Activated CD4-positive, alpha-beta T cell treated with anti-CD3 and anti-CD28 coated beads, Interleukin-2, amount 10 ng/mL, durations not matched to agents 24 days and 14 days (primary cell): ENCODE measurements at regions of chr1 and their contacts with region 1.

Region 1: DNA sequence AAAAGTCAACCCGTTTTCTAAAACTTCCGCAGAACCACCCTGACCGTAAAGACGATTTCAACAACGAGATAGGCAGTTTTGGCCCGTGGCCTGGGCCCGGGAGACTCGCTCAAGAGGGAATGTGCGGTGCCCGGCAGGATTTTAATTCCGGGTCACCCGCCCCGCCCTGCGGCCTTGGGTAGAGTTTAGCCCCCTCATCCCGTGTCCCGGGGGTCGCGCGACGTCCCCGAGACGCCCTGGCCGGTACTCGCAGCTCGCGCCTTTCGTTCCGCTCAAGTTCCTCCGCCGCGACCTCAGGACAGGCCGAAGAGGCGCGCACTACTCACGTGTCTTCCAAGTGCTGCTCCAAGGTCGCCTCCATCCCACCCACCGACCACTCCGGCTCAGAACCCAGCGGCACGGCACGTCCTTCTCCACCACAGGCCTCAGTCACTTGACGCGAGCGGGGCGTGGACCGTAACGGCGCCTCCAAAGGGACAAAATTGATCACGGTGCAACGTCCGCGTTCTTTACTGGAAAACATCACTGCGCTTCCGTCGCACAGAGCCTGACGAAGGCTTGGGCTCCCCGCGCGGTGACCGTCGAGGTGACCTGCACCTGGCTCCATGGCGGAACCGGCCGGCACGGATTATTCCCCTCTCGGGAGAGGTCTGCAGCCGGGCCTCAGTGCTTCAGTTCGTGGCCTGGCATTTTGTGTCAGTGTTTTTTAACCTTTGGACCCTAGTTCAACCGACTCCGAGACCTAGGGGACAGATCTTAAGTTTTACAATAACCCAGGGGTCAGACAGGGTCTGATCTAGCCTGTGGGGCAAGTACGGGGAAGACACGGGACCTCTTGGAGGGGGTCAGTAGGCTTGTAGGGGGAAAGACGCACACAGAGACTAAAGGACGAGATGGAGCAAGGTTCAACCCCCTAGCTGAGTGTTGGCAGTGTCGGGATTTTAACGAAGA is at the start of gene LAMTOR5:
- DNase-seq: peak; percentile 98
- H3K4me3 Mint-ChIP-seq: peak within 1 kb of the TSS; percentile 99
- H3K27ac Mint-ChIP-seq: peak within 1 kb of the TSS; percentile 98
- H3K4me1 Mint-ChIP-seq: peaks cover 17% of the 10 kb centered on the region
- H3K27me3 Mint-ChIP-seq: no peaks in the 10 kb centered on the region
- total RNA-seq, gene LAMTOR5: 170 and 180 TPM in 2 replicates

Region 2: GRCh38 chr1:110370827-110371226 is 36.7 kb before region 1 on chr1:
- intact Hi-C with region 1: loop called (anchors 5 kb)
- DNase-seq: no peak
- H3K4me3 Mint-ChIP-seq: no peak overlapping the region
- H3K27ac Mint-ChIP-seq: peak overlapping the region; percentile 61
- H3K4me1 Mint-ChIP-seq: peaks cover 9% of the 10 kb centered on the region
- H3K27me3 Mint-ChIP-seq: no peaks in the 10 kb centered on the region

Region 3: GRCh38 chr1:110390692-110391245 is 16.8 kb before region 1 on chr1 and contains the start of gene SLC16A4:
- intact Hi-C with region 1: loop called (anchors 2 kb)
- DNase-seq: no peak
- H3K4me3 Mint-ChIP-seq: no peak within 1 kb of the TSS
- H3K27ac Mint-ChIP-seq: no peak within 1 kb of the TSS
- H3K4me1 Mint-ChIP-seq: peaks cover 4% of the 10 kb centered on the region
- H3K27me3 Mint-ChIP-seq: no peaks in the 10 kb centered on the region
- total RNA-seq, gene SLC16A4: 0.43 and 0.44 TPM in 2 replicates

Region 4: GRCh38 chr1:110477041-110477440 is 69.5 kb after region 1 on chr1:
- intact Hi-C with region 1: no loop called
- DNase-seq: no peak
- H3K4me3 Mint-ChIP-seq: no peak overlapping the region
- H3K27ac Mint-ChIP-seq: no peak overlapping the region
- H3K4me1 Mint-ChIP-seq: no peaks in the 10 kb centered on the region
- H3K27me3 Mint-ChIP-seq: peaks cover 6% of the 10 kb centered on the region